Panc1 (cell line): ENCODE measurements at regions of chr12 and their contacts with region 1.

Region 1: GRCh38 chr12:119340578-119340977 is 6.0 kb downstream of the CCDC60 start:
- DNase-seq: no peak
- ATAC-seq: no peak
- H3K4me3 ChIP-seq: no peak overlapping the region
- H3K27ac ChIP-seq: no peak overlapping the region
- H3K4me1 ChIP-seq: no peaks in the 10 kb centered on the region
- H3K27me3 ChIP-seq: peaks cover 3% of the 10 kb centered on the region; the same call in 1 of the 2 replicates
- CTCF ChIP-seq: no peak

Region 2: DNA sequence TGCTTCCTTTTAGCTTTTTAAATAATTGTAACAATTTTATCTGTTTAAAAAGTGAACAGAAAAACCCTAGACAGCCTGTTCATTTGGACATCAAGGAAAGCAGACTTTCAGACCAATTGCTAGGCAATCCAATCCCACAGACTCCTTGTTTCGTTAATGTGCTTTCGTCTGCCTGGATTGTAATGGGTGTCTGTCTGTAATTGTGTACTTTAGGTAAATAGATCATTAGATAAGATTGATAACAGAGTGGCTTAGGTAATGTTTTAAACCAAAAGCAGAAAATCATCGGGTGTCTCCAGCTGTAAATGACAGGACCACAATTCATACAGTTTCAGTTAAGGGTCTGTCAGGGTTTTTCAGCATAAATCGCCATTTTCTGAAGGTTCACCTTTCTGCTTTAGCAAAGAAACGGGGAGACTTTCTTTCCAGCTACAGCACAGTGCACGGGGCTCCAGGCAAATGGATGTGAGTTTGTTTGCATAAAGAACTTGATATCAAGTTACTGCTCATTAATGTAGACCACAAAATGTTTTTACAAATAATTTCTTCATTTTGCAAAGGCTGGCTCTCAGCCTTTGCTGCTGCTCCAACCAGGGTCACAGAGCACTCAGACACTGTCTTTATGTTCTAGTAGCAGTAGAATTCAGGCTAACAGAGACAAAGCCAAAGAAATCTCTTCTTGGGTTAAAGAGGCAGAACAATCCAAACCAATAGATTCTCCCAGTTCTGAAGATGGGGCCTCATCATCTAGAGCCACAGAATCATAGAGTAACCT is 13.8 kb after region 1 on chr12:
- CTCF ChIA-PET with region 1: interaction called, 11 read pairs
- POLR2A ChIA-PET with region 1: no interaction called
- in situ Hi-C with region 1: no loop called
- intact Hi-C with region 1: no loop called
- DNase-seq: no peak
- ATAC-seq: no peak
- H3K4me3 ChIP-seq: no peak overlapping the region
- H3K27ac ChIP-seq: no peak overlapping the region
- H3K4me1 ChIP-seq: no peaks in the 10 kb centered on the region
- H3K27me3 ChIP-seq: no peaks in the 10 kb centered on the region
- CTCF ChIP-seq: no peak

Region 3: DNA sequence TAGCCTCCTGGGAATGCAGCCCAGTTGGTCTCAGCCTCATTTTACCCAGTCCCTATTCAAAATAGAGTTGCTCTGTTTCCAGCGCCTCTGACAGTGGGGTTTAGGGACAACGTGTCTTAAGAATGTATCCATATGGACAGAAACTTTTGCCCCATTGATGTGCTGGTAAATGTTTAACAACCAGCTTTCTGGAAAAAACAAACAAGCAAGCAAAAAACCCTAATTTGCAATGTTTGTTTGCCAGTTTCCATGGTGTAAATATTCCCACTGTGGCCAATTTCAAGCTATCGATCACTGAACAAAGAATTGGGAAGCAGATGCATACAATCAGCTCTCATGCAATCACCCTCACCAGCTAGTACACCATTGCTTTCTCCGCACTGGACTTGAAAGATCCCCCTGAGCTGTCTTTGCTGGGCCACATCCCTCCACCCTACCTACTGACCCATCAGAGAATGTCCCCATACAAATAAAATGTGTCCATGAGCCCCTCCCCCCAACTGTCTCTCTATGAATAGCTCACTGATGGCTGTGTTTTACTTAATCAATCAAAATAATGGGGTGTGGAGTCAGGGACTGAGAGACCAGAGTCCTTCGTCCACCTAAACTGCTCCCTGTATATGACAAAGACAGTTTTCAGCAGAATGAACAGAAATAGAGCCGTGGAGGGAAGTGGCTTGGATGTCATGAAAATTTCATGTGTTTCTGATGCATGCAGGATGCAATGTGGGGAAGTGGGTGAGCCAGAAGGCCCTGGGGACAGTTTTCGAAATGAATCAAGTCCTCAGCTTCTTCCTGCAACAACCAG is 34.7 kb after region 1 on chr12:
- CTCF ChIA-PET with region 1: no interaction called
- POLR2A ChIA-PET with region 1: no interaction called
- in situ Hi-C with region 1: loop called (anchors 5 kb)
- intact Hi-C with region 1: no loop called
- DNase-seq: no peak
- ATAC-seq: no peak
- H3K4me3 ChIP-seq: no peak overlapping the region
- H3K27ac ChIP-seq: no peak overlapping the region
- H3K4me1 ChIP-seq: no peaks in the 10 kb centered on the region
- H3K27me3 ChIP-seq: peaks cover 4% of the 10 kb centered on the region
- CTCF ChIP-seq: no peak

Region 4: DNA sequence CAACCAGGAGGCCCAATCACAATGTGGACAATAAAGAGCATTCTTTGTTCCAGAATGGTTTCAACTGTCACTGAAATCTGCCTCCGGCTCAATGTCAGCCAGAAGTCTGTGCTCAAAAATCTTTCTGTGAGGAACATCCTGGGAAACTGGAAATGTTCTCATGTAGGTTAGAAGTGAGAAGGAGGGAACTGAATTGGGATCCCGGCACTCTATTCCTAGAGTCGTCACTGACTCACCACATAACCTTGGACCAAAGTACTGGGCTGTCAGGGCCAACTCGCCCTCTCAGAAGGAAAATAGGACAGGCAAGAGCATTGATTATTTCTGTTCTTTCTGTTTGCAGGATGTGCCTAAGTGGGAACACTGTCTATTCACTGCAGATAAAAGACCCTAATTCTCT is 384.9 kb after region 1 on chr12:
- CTCF ChIA-PET with region 1: no interaction called
- POLR2A ChIA-PET with region 1: no interaction called
- in situ Hi-C with region 1: no loop called
- intact Hi-C with region 1: no loop called
- DNase-seq: no peak
- ATAC-seq: no peak
- H3K4me3 ChIP-seq: no peak overlapping the region
- H3K27ac ChIP-seq: no peak overlapping the region
- H3K4me1 ChIP-seq: no peaks in the 10 kb centered on the region
- H3K27me3 ChIP-seq: no peaks in the 10 kb centered on the region
- CTCF ChIP-seq: no peak